Transverse colon (tissue), 4 donors: ENCODE measurements at regions of chr15 and their contacts with region 1.

Region 1: DNA sequence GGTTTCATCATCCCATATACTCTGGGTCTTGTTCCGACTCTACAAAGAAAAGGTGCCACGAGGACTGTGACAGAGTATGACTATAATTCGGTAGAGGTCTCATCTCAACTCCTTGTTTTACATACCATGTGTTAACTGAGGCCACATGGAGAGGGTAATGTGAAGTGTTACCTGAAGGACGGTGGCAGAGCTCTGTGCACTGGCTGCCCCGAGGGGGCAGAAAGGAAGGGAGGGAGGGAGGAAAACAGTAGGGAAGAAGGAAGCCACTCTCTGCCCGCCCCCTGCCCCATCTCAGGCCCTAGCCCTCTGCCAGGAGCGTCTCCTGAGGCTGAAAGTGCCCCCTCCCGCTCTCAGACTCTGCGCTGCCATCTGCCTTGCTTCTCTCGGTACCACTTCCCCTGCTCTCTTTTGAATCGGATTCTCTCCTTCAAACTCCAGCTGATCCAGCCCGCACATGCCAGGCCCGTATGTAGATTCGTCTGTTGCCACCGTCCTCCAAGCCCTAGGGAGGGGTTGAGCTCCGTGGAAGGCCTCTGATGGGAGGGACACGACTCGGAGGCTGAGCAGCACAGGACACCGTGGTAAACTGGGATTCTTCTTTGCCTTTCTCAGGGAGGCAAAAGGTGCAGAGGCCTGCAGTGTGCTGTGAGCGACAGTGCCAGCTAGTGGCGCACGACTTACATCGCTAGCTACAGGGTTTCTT is 70.5 kb upstream of the ATP10A start:
- DNase-seq: peak; percentile 50
- H3K4me3 ChIP-seq: peak overlapping the region in 2 of 4 donors; percentile 21 to 31
- H3K27ac ChIP-seq: no peak overlapping the region
- H3K4me1 ChIP-seq: no peaks in the 10 kb centered on the region
- H3K27me3 ChIP-seq: no peaks in the 10 kb centered on the region
- CTCF ChIP-seq: peak; percentile 47 to 70 (median 59)
- EP300 ChIP-seq: no peak
- POLR2A ChIP-seq: no peak

Region 2: GRCh38 chr15:25693321-25694237 is 240.0 kb before region 1 on chr15:
- in situ Hi-C with region 1: no loop called
- intact Hi-C with region 1: loop called (anchors 10 kb)
- DNase-seq: no peak
- H3K4me3 ChIP-seq: no peak overlapping the region
- H3K27ac ChIP-seq: no peak overlapping the region
- H3K4me1 ChIP-seq: no peaks in the 10 kb centered on the region
- H3K27me3 ChIP-seq: no peaks in the 10 kb centered on the region
- CTCF ChIP-seq: peak; percentile 27 to 50 (median 41)
- EP300 ChIP-seq: no peak
- POLR2A ChIP-seq: no peak

Region 3: DNA sequence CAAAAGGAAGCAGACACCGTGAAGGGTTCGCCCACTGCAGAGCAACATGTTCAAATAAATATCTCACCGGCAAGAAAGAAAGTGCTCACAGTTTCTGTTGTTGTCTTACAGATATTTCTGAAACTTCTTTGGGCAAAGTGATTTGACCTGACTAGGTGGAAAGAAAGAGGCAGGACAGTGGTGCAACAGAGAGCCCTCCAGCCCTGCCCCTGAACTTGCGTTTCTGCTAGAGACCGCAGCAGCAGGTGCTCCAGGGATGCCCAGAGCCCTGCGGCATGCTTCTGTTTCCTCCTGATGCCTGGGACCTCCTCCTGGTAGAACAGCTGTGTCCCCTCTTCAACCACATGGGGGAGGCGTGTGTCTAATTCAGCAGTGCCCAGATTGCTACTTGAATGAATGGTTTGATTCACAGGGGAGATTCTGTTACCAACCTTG is 193.9 kb before region 1 on chr15:
- in situ Hi-C with region 1: loop called in 1 of 4 experiments (anchors 25 kb)
- intact Hi-C with region 1: loop called (anchors 1 kb)
- DNase-seq: no peak
- H3K4me3 ChIP-seq: no peak overlapping the region
- H3K27ac ChIP-seq: no peak overlapping the region
- H3K4me1 ChIP-seq: peaks cover 0 to 18% (median 8%) of the 10 kb centered on the region in 4 donors
- H3K27me3 ChIP-seq: no peaks in the 10 kb centered on the region
- CTCF ChIP-seq: no peak
- EP300 ChIP-seq: no peak
- POLR2A ChIP-seq: no peak